CD8-positive, alpha-beta T cell (primary cell): ENCODE measurements at regions of chr1 and their contacts with region 1.

Region 1: DNA sequence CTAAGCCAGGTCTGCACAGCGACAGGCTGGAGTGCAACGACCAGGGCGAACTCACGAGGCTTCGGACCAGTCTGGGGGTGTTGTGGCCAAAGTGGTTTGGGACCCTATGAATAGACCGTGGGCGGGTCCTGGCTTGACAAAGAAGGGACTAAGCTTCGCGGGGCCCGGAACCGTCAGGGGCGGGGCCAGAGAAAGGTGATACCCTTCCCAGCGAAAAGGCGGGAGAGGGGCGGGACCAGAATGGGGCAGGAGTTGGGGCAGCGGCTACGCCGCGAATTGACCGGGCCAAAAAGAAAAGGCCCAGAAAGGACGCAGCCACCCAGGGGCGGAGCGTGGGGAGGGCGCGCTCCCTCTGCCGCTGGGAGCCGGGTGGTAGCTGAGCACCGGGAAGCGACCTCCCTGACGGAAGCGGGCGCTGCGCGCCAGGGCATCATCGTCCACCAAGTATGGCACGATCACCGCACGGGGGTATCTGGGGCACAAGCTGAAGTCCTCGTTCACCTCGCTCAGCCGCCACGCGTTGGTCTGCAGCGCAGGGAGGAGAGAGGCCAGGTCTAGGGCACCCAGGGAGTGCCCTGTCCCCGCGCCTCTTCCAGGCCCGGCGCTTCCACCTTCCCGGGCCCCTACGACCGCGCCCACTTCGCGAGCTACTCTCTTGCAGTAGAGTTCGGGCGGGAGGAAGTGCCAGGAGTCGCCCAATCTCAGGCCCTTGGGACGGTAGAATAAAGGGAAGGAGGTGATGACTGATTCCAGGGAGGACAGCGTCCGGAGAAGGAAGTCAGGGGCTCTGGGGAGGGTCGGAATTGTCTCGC is 6.7 kb upstream of the FAM167B start:
- DNase-seq: peak in 8 of 9 experiments; percentile 26 to 85 (median 76)
- ATAC-seq: peak; percentile 69
- H3K4me3 ChIP-seq: peak overlapping the region; percentile 76 to 89
- H3K4me3 Mint-ChIP-seq: peak overlapping the region; percentile 90
- H3K27ac ChIP-seq: peak overlapping the region; percentile 22 to 49
- H3K27ac Mint-ChIP-seq: peak overlapping the region; percentile 62
- H3K4me1 ChIP-seq: peaks cover 26% of the 10 kb centered on the region
- H3K4me1 Mint-ChIP-seq: peaks cover 23% of the 10 kb centered on the region
- H3K27me3 ChIP-seq: no peaks in the 10 kb centered on the region
- H3K27me3 Mint-ChIP-seq: no peaks in the 10 kb centered on the region
- CTCF ChIP-seq: peak; percentile 24

Region 2: DNA sequence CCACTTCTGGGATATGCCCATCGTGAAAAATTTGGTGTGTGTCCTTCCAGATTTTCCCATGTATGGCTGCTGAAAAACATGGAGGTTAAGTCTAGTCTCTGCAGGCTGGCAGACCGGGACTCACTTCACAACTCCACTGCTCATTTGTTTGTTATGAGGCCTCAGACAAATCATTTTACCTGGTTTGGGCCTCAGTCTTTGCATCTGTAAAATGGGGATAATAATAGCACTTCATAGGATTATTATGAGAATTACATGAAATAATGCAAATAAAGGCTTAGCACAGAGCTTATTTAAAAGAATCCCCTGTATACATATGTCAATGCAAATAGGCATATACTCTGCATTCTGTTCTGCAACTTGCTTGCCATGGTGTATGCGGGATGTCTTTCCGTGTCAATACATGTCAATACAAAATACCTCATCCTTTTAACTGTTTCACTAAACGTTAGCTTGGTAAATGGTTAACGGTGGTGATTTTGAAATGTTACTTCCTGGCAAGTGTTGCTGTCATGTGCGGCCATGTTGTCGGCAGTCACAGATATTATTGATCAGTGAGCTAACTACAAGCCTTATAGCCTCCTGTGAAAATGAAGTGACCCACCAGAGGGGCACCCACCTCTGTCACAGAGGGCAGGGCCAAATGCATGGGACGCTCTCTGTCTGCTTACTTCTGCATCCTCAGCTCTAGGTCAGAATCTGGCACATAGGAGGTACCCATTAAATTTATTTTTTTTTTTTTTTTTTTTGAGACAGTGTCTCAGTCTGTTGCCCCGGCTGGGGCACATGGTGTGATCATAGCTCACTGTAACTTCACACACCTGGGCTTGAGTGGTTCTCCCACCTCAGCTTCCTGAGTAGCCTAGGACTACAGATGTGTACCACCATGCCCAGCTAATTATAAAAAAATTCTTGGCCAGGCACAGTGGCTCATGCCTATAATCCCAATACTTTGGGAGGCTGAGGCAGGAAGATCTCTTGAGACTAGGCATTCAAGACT is 15.0 kb after region 1 on chr1:
- CTCF ChIA-PET with region 1: interaction called, 63 read pairs
- POLR2A ChIA-PET with region 1: interaction called, 91 read pairs
- intact Hi-C with region 1: loop called in 1 of 2 experiments (anchors 1 kb)
- DNase-seq: peak in 3 of 9 experiments; percentile 34 to 58 (median 35)
- ATAC-seq: peak; percentile 13
- H3K4me3 ChIP-seq: peak overlapping the region; percentile 45 to 84
- H3K4me3 Mint-ChIP-seq: peak overlapping the region; percentile 87
- H3K27ac ChIP-seq: peak overlapping the region; percentile 38 to 93
- H3K27ac Mint-ChIP-seq: peak overlapping the region; percentile 99
- H3K4me1 ChIP-seq: peaks cover 44% of the 10 kb centered on the region
- H3K4me1 Mint-ChIP-seq: peaks cover 55% of the 10 kb centered on the region
- H3K27me3 ChIP-seq: no peaks in the 10 kb centered on the region
- H3K27me3 Mint-ChIP-seq: no peaks in the 10 kb centered on the region
- CTCF ChIP-seq: no peak

Region 3: DNA sequence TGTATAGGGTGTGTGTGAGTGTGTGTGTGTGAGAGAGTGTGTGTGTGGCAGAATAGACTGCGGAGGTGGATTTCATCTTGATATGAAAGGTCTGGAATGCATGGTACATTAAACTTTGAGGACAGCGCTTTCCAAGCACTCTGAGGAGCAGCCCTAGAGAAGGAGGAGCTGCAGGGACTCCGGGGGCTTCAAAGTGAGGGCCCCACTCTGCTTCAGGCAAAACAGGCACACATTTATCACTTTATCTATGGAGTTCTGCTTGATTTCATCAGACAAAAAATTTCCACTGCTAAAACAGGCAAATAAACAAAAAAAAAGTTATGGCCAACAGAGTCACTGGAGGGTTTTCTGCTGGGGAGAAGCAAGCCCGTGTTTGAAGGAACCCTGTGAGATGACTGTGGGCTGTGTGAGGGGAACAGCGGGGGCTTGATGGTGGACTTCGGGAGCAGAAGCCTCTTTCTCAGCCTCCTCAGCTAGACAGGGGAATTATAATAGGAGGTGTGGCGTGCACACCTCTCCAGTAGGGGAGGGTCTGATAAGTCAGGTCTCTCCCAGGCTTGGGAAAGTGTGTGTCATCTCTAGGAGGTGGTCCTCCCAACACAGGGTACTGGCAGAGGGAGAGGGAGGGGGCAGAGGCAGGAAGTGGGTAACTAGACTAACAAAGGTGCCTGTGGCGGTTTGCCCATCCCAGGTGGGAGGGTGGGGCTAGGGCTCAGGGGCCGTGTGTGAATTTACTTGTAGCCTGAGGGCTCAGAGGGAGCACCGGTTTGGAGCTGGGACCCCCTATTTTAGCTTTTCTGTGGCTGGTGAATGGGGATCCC is 33.3 kb after region 1 on chr1:
- CTCF ChIA-PET with region 1: interaction called, 7 read pairs
- POLR2A ChIA-PET with region 1: interaction called, 12 read pairs
- intact Hi-C with region 1: no loop called
- DNase-seq: peak; percentile 58 to 96 (median 87)
- ATAC-seq: peak; percentile 88
- H3K4me3 ChIP-seq: peak overlapping the region; percentile 23 to 53
- H3K4me3 Mint-ChIP-seq: peak overlapping the region; percentile 83
- H3K27ac ChIP-seq: peak overlapping the region; percentile 36 to 77
- H3K27ac Mint-ChIP-seq: peak overlapping the region; percentile 98
- H3K4me1 ChIP-seq: peaks cover 78% of the 10 kb centered on the region
- H3K4me1 Mint-ChIP-seq: peaks cover 67% of the 10 kb centered on the region
- H3K27me3 ChIP-seq: no peaks in the 10 kb centered on the region
- H3K27me3 Mint-ChIP-seq: no peaks in the 10 kb centered on the region
- CTCF ChIP-seq: no peak

Region 4: GRCh38 chr1:33367485-33368405 is 1127.4 kb after region 1 on chr1:
- CTCF ChIA-PET with region 1: no interaction called
- POLR2A ChIA-PET with region 1: no interaction called
- intact Hi-C with region 1: no loop called
- DNase-seq: peak; percentile 72 to 92 (median 86)
- ATAC-seq: peak; percentile 99
- H3K4me3 ChIP-seq: no peak overlapping the region
- H3K4me3 Mint-ChIP-seq: no peak overlapping the region
- H3K27ac ChIP-seq: no peak overlapping the region
- H3K27ac Mint-ChIP-seq: no peak overlapping the region
- H3K4me1 ChIP-seq: no peaks in the 10 kb centered on the region
- H3K4me1 Mint-ChIP-seq: peaks cover 1% of the 10 kb centered on the region
- H3K27me3 ChIP-seq: no peaks in the 10 kb centered on the region
- H3K27me3 Mint-ChIP-seq: no peaks in the 10 kb centered on the region
- CTCF ChIP-seq: peak; percentile 86